ENCODE measurements at regions of chr20 and their contacts with region 1.

Region 1: DNA sequence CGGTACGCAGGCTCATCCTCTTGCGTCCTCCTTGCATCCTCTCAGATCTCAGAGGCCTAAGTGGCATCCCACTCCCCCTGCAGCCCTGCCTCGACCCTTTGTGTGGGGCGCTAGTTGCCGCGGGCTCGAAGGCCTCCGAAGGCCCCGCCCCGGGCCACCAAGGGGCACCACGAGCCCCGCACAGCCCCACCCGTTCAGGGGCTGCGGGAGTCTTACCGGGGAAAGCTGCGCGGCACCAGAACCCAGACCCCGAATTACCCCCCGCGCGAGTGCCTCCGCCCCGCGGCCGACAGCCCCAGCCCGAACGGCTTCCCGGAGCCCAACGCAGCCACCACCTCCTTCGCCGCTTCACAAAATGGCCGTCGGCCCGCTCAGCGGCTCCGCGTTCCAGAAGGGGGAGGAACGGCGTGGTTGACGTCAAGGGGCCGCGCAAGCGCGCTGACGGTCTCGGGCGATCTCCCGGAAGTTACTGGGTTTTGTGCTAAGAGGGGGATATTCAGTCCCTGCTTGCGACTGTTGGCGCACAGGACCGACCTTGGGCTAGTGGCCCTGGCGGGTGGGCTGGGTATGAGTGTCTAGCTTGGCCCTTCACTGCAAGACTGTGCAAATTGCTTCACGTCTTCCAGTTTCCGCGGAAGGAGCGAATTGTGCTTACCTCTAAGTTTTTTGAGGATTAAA is at the starts of genes CPNE1 and RBM12:
- DNase-seq: peak; percentile 87
- H3K4me3 ChIP-seq: peak within 1 kb of the TSS; percentile 69 to 77
- H3K27ac ChIP-seq: peak within 1 kb of the TSS; percentile 97
- H3K4me1 ChIP-seq: no peaks in the 10 kb centered on the region
- H3K27me3 ChIP-seq: no peaks in the 10 kb centered on the region
- CTCF ChIP-seq: peak in 2 of 4 experiments; percentile 4 to 27
- POLR2A ChIP-seq: peak; percentile 93
- total RNA-seq, gene CPNE1: 90.1 to 91.4 TPM
- total RNA-seq, gene RBM12: 31.8 to 38.9 TPM

Region 2: GRCh38 chr20:35541783-35542588 is 122.7 kb before region 1 on chr20 and contains the start of gene ERGIC3:
- intact Hi-C with region 1: loop called (anchors 5 kb)
- DNase-seq: peak; percentile 95
- H3K4me3 ChIP-seq: peak within 1 kb of the TSS; percentile 62 to 91
- H3K27ac ChIP-seq: peak within 1 kb of the TSS; percentile 63 to 70
- H3K4me1 ChIP-seq: peaks cover 6% of the 10 kb centered on the region
- H3K27me3 ChIP-seq: no peaks in the 10 kb centered on the region
- CTCF ChIP-seq: peak in 3 of 4 experiments; percentile 16 to 32 (median 25)
- POLR2A ChIP-seq: peak; percentile 50
- total RNA-seq, gene ERGIC3: 277 to 282 TPM

Region 3: DNA sequence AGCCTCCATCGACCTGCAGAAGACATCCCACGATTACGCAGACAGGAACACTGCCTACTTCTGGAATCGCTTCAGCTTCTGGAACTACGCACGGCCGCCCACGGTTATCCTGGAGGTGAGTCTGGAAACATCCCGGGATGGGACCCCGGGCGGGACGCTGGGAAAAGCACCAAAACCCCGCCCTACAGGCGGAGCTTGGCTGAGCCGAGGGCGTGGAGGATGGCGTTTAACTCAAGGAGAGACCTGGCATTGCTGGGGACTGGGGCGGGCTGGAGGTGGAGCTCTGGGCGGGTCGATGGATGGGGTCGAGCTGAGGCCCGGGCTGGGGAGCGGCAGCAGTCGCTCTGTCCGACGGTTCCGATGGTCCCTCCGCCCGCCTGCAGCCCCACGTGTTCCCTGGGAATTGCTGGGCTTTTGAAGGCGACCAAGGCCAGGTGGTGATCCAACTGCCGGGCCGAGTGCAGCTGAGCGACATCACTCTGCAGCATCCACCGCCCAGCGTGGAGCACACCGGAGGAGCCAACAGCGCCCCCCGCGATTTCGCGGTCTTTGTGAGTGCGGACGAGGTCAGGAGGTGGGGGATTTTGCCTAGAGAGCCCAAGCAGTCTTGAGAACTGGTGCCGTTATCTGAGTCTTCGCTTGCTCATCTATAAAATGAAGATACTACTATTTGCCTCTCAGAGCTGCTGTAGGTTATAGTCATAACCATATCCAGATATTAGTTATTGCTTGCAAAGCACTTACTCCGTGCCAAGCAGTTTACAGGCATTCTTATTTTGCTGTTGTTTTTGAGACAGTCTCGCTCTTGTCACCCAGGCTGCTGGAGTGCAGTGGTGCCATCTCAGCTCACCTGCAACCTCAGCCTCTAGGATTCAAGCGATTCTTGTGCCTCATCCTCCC is 45.2 kb before region 1 on chr20:
- intact Hi-C with region 1: loop called (anchors 5 kb)
- DNase-seq: peak; percentile 66
- H3K4me3 ChIP-seq: peak overlapping the region; percentile 29 to 36
- H3K27ac ChIP-seq: peak overlapping the region in 1 of 2 donors; percentile 10
- H3K4me1 ChIP-seq: peaks cover 9% of the 10 kb centered on the region
- H3K27me3 ChIP-seq: no peaks in the 10 kb centered on the region
- CTCF ChIP-seq: peak in 2 of 4 experiments; percentile 6 to 13
- POLR2A ChIP-seq: peak; percentile 45

Region 4: GRCh38 chr20:35699127-35699975 is 34.7 kb after region 1 on chr20 and contains the starts of genes NFS1 and ROMO1:
- intact Hi-C with region 1: no loop called
- DNase-seq: peak; percentile 77
- H3K4me3 ChIP-seq: peak within 1 kb of the TSS; percentile 78 to 92
- H3K27ac ChIP-seq: peak within 1 kb of the TSS; percentile 84 to 85
- H3K4me1 ChIP-seq: no peaks in the 10 kb centered on the region
- H3K27me3 ChIP-seq: no peaks in the 10 kb centered on the region
- CTCF ChIP-seq: peak in 3 of 4 experiments; percentile 22 to 37 (median 34)
- POLR2A ChIP-seq: no peak
- total RNA-seq, gene NFS1: 41.2 to 56.7 TPM
- total RNA-seq, gene ROMO1: 249 to 320 TPM